ENCODE measurements at regions of chr13 and their contacts with region 1.

Region 1: DNA sequence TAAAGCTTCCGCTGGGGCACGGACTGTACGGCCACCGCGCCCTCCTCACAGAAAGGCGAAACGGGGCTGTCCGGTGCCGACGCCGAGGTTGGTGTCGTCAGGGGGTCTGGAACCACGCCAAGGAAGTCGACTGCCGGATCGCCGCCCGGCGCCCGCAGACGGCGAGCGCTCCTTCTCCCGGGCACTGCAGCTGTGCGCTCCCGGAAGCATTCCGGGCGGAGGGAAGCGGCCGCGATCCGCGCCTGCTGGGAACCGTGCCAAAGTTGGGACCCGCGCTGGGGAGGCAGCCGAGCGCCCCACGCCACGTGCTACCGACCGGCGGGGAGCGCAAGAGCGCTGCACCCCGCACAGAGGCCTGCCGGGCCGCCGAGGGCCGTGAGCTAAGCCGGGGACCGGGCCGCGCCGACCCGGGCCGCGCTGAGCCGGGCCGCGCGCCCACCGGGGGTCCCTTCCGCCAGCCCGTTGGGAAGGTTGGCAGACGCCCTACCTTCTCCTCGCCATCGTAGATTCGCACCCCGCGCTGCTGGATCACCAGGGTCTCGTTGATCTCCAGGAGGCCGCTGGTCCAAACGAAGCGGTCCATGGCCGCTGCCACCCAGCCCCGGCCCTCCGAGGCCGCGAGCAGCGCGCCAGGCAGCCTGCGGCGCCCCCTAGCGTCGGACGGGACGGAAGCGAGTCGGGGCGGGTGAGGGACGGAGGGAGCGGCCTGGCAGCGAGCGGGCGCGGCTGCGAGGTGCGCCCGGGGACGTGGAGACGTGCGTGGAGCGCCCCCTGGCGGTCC is at the start of gene VPS36:
- DNase-seq: peak; percentile 98
- H3K4me3 ChIP-seq: peak within 1 kb of the TSS; percentile 61 to 97 (median 67)
- H3K27ac ChIP-seq: peak within 1 kb of the TSS; percentile 94 to 99 (median 96)
- H3K4me1 ChIP-seq: peaks cover 8 to 39% (median 27%) of the 10 kb centered on the region in 4 donors
- H3K27me3 ChIP-seq: no peaks in the 10 kb centered on the region
- CTCF ChIP-seq: peak in 4 of 5 experiments; percentile 98 to 100 (median 100)
- EP300 ChIP-seq: no peak
- POLR2A ChIP-seq: peak; percentile 94
- total RNA-seq, gene VPS36: 35.2 to 101 (median 71.5) TPM

Region 2: DNA sequence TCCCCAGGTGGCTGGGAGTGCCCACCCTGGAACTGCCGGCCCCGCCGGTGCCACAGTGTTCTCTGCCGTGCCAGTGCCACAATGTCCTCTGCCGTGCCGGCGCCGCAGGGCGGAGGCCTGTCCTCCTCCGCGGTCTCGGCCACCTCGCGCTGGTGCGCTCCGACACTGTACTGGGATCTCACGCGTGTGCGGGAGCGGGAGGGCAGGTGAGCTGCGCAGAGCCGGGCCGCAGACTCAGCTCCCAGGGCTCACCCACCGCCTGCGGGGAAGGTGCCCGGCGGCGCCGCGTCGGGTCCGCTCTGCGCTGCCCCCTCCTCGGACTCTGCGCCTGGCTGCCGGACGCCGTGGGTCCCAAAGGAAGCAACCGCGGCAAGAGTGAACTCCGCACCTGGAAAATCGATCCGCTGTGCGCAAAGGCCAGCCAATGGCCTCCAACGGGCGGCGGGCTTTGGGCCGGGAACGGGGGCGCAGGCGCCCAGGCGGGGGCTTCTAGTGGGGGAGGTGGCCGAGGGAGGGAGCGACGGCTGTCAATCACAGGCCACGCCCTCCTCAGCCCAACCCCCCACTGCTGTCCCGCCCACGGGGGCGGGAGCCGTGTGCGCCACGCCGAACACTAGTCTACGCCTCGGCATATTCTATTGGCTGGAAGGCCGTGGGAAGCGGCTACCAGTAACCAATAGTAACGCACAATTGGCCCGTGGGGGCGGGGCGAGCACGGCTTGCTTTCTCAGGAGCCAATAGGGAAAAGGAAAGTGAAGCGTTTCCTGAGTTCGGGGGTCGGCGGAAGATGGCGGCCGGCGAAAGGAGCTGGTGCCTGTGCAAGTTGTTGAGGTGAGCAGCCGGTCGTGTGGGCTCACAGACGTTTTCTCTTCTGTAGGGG is 438.3 kb before region 1 on chr13 and contains the start of gene ALG11:
- in situ Hi-C with region 1: loop called in 1 of 4 experiments (anchors 25 kb)
- intact Hi-C with region 1: no loop called
- DNase-seq: peak; percentile 100
- H3K4me3 ChIP-seq: peak within 1 kb of the TSS; percentile 62 to 86 (median 74)
- H3K27ac ChIP-seq: peak within 1 kb of the TSS; percentile 82 to 91 (median 86)
- H3K4me1 ChIP-seq: peaks cover 3 to 30% (median 22%) of the 10 kb centered on the region in 4 donors
- H3K27me3 ChIP-seq: no peaks in the 10 kb centered on the region
- CTCF ChIP-seq: peak in 1 of 5 experiments; percentile 14
- EP300 ChIP-seq: no peak
- POLR2A ChIP-seq: peak; percentile 58
- total RNA-seq, gene ALG11: 9.0 to 30.6 (median 28.8) TPM

Region 3: GRCh38 chr13:52194184-52194868 is 255.9 kb before region 1 on chr13:
- in situ Hi-C with region 1: loop called in 3 of 4 experiments (anchors 25 kb)
- intact Hi-C with region 1: no loop called
- DNase-seq: peak; percentile 90
- H3K4me3 ChIP-seq: peak overlapping the region; percentile 58 to 83 (median 73)
- H3K27ac ChIP-seq: peak overlapping the region; percentile 90 to 93 (median 92)
- H3K4me1 ChIP-seq: peaks cover 4 to 28% (median 17%) of the 10 kb centered on the region in 4 donors
- H3K27me3 ChIP-seq: no peaks in the 10 kb centered on the region
- CTCF ChIP-seq: peak in 1 of 5 experiments; percentile 18
- EP300 ChIP-seq: no peak
- POLR2A ChIP-seq: peak; percentile 74

Region 4: DNA sequence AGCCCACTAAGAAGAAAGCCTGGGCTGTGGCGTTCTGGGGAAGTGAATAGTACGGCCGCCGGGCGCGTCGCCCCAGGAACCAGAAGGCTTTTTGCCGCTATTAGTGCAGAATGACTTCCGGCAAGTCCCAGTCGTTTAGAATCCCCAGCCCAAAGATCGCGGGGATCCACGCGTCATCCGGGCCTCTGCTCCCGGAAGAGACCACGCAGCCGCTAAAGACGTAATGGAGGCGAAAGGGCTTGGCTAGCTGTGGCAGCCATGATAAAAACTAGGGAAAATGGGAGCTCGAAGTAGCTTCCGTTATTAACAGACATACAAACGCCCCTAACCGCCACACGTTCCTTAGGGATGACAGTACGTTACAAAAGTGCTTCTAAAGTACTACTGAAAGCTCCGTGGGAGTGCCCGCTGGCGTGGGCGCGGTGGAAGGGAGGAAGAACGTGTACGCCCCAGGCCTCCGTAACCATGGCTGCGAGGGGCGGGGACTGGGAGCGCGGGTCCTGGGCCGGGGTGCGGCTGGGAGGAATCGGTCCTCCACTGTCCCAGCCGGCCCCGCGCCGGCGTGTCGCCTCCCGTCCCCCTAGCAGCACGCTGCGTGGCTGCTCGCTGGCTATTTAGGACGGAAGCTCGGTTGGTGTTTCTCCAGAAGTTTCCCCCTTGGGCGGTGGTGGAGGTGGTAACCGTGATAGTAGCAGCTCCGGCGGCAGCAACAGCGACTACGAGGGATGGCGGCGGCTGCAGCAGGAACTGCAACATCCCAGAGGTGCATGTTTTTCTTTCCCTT is 202.2 kb after region 1 on chr13 and contains the start of gene SUGT1:
- in situ Hi-C with region 1: loop called in 3 of 4 experiments (anchors 25 kb)
- intact Hi-C with region 1: no loop called
- DNase-seq: peak; percentile 99
- H3K4me3 ChIP-seq: peak within 1 kb of the TSS; percentile 60 to 93 (median 78)
- H3K27ac ChIP-seq: peak within 1 kb of the TSS; percentile 95 to 99 (median 96)
- H3K4me1 ChIP-seq: peaks cover 7 to 47% (median 27%) of the 10 kb centered on the region in 4 donors
- H3K27me3 ChIP-seq: no peaks in the 10 kb centered on the region
- CTCF ChIP-seq: peak; percentile 56 to 90 (median 72)
- EP300 ChIP-seq: no peak
- POLR2A ChIP-seq: peak; percentile 87
- total RNA-seq, gene SUGT1: 18.7 to 38.9 (median 25.3) TPM

Measured in transverse colon (tissue), 4 donors.